Gastrocnemius medialis (tissue), 4 donors: ENCODE measurements at regions of chr16 and their contacts with region 1.

Region 1: DNA sequence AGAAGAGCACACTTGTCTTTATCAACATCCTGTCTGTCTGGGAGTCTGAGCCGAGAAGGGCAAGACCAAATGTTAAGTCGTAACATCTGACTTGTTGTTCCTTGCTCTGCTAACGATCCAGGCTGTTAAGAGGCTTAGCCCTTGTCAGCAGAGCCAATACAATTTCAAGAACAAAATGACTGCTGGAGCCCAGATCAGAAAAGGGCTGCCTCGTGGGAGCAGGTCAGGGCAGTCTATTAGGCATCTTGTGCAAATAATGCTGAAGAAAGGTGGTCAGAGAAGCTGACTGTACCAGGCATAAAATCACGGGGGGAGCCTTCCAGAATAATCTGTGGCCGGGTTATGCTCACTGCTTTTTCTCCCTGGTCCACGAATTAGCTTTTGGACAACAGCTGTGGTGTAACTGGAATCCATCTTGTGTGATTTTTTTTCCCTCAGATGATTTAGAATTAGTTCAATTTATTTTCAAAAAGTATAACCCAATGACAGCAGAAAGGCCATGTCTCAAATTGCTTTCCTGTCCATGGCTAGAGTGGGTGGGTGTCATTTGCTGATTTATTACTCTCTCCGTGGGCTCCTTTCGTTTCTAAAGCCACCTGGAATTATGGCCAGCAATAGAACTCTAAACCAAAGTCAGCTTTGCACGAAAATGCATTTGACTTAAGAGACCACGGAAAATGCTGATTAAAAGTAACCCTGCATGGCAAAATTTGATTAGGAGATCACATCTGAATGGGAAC is 221.1 kb upstream of the HSBP1 start:
- DNase-seq: no peak
- ATAC-seq: no peak
- H3K4me3 ChIP-seq: no peak overlapping the region
- H3K27ac ChIP-seq: no peak overlapping the region
- H3K4me1 ChIP-seq: no peaks in the 10 kb centered on the region
- H3K27me3 ChIP-seq: no peaks in the 10 kb centered on the region
- CTCF ChIP-seq: no peak
- POLR2A ChIP-seq: no peak

Region 2: GRCh38 chr16:83258366-83258928 is 328.2 kb before region 1 on chr16:
- in situ Hi-C with region 1: no loop called
- intact Hi-C with region 1: loop called (anchors 5 kb)
- DNase-seq: no peak
- ATAC-seq: no peak
- H3K4me3 ChIP-seq: no peak overlapping the region
- H3K27ac ChIP-seq: no peak overlapping the region
- H3K4me1 ChIP-seq: no peaks in the 10 kb centered on the region
- H3K27me3 ChIP-seq: no peaks in the 10 kb centered on the region
- CTCF ChIP-seq: no peak
- POLR2A ChIP-seq: no peak

Region 3: GRCh38 chr16:83717814-83718213 is 131.2 kb after region 1 on chr16:
- in situ Hi-C with region 1: no loop called
- intact Hi-C with region 1: no loop called
- DNase-seq: no peak
- ATAC-seq: no peak
- H3K4me3 ChIP-seq: no peak overlapping the region
- H3K27ac ChIP-seq: no peak overlapping the region
- H3K4me1 ChIP-seq: peaks cover 12 to 15% of the 10 kb centered on the region in 2 donors
- H3K27me3 ChIP-seq: no peaks in the 10 kb centered on the region
- CTCF ChIP-seq: no peak
- POLR2A ChIP-seq: no peak